ENCODE measurements at regions of chr7 and their contacts with region 1.

Region 1: DNA sequence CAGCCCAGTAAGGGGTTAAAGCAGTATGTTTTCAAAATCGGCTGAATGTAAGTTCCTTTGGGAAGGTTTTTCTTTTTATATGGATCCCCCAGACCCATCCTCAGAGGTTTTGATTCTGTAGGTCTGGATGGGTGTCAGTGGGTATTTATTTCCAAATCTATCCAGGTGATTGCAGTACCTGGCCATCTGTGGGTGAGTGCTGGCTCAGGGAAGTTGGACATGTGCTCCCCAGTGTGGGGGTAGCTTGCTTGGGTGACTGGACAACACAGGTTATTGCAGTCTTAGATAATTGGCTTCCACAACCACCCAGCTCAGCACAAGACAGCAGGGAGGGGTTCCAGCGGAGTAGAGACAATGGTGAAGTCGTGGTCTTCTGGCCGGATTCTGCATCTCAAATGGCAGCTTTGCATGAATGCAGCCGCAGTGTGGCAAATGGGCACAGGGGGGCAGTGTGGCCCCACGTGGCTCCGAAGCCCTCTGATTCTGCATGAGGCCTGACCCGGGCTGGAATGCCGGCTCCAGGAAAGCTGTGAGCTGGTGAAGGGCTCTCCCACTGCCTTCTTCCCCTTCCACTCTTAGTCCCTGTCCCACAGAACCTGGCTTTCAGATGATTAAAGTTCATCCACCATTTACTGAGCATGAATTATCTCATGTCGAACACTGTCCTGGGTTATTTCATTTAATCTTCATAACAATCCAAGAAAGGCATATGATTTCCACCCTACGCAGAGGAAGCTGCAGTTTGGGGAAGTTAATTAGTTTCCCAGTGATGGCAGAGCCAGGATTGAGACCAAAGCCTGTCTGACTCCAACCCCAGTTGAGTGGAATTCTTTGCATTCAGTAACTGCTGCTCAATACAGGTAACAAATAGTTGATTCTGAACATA is 64.5 kb upstream of the SYPL1 start:
- DNase-seq: peak; percentile 56
- H3K4me3 Mint-ChIP-seq: no peak overlapping the region
- H3K27ac Mint-ChIP-seq: no peak overlapping the region
- H3K4me1 Mint-ChIP-seq: peaks cover 5% of the 10 kb centered on the region
- H3K27me3 Mint-ChIP-seq: peaks cover 21% of the 10 kb centered on the region

Region 2: GRCh38 chr7:106139265-106140251 is 37.1 kb before region 1 on chr7:
- intact Hi-C with region 1: no loop called
- DNase-seq: no peak
- H3K4me3 Mint-ChIP-seq: no peak overlapping the region
- H3K27ac Mint-ChIP-seq: no peak overlapping the region
- H3K4me1 Mint-ChIP-seq: no peaks in the 10 kb centered on the region
- H3K27me3 Mint-ChIP-seq: peaks cover 21% of the 10 kb centered on the region

Region 3: GRCh38 chr7:106187613-106188350 is 11.1 kb after region 1 on chr7:
- intact Hi-C with region 1: no loop called
- DNase-seq: no peak
- H3K4me3 Mint-ChIP-seq: no peak overlapping the region
- H3K27ac Mint-ChIP-seq: no peak overlapping the region
- H3K4me1 Mint-ChIP-seq: peaks cover 8% of the 10 kb centered on the region
- H3K27me3 Mint-ChIP-seq: peaks cover 28% of the 10 kb centered on the region

Region 4: DNA sequence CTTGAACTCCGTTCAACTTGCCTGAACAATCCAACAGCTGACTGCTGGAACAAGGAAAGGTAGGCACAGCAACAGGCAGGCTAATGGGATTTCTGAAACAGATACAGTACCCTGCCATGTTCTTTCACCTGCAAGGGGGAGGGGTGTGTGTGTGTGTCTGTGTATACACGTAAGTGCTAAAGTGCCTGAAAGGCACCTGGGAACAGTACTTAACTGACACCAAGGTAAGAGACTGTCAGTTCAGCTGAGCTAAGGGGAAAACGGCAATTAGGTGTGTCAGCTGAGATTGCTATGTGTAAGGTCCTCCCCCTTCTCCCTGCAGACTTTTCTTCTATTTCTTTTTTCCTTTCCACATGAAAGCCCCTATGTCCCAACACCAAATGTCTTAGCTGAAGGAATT is 81.1 kb after region 1 on chr7:
- intact Hi-C with region 1: loop called (anchors 5 kb)
- DNase-seq: no peak
- H3K4me3 Mint-ChIP-seq: no peak overlapping the region
- H3K27ac Mint-ChIP-seq: peak overlapping the region; percentile 25
- H3K4me1 Mint-ChIP-seq: peaks cover 63% of the 10 kb centered on the region
- H3K27me3 Mint-ChIP-seq: no peaks in the 10 kb centered on the region

Region 5: GRCh38 chr7:106273009-106273668 is 96.5 kb after region 1 on chr7:
- intact Hi-C with region 1: no loop called
- DNase-seq: no peak
- H3K4me3 Mint-ChIP-seq: no peak overlapping the region
- H3K27ac Mint-ChIP-seq: peak overlapping the region; percentile 60
- H3K4me1 Mint-ChIP-seq: peaks cover 32% of the 10 kb centered on the region
- H3K27me3 Mint-ChIP-seq: no peaks in the 10 kb centered on the region

Region 6: GRCh38 chr7:106367018-106367420 is 190.4 kb after region 1 on chr7:
- intact Hi-C with region 1: loop called (anchors 5 kb)
- DNase-seq: no peak
- H3K4me3 Mint-ChIP-seq: no peak overlapping the region
- H3K27ac Mint-ChIP-seq: peak overlapping the region; percentile 38
- H3K4me1 Mint-ChIP-seq: peaks cover 26% of the 10 kb centered on the region
- H3K27me3 Mint-ChIP-seq: peaks cover 18% of the 10 kb centered on the region

Region 7: DNA sequence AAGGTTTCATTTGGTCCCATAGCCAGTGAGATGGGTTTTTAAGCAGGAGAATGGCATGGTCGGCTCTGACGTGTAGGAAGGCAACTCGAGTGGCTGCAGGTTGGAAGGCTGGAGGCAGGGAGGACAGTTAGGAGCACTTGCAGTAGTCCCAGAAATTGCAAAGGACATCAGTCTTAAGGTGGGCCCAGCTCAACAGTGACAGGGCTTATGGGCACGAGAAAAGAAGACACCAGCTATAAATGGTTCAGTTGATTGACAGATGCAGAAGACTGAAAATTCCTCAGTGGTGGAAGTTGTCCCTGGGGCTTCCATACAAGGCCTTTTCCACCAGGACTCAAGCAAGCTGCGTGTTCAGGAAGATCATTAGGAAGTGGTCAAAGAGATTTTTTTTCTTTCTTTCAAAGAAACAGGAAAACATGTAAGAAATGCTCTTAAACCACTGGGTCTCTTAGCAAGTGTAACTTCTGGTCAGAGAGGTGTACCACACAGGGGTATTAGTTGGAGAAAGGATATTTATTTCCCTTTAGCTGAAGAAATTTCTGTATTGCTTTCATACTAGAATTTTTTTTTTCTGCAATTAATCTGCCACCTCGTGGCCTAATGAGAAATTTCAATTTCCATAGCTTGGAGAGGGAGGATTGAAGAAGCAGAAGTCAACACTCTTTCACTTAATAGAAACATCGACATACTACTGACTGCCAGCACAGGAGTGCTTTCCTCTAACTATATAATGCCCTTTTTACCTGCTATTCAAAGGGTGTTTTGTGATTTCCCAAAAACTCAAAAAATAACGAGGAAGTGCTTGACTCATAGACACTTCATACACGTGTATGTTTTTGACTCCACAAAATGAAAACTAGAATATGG is 285.6 kb after region 1 on chr7:
- intact Hi-C with region 1: loop called (anchors 1 kb)
- DNase-seq: no peak
- H3K4me3 Mint-ChIP-seq: no peak overlapping the region
- H3K27ac Mint-ChIP-seq: no peak overlapping the region
- H3K4me1 Mint-ChIP-seq: peaks cover 16% of the 10 kb centered on the region
- H3K27me3 Mint-ChIP-seq: no peaks in the 10 kb centered on the region

Region 8: GRCh38 chr7:106542550-106543220 is 366.0 kb after region 1 on chr7:
- intact Hi-C with region 1: loop called (anchors 2 kb)
- DNase-seq: peak; percentile 33
- H3K4me3 Mint-ChIP-seq: no peak overlapping the region
- H3K27ac Mint-ChIP-seq: no peak overlapping the region
- H3K4me1 Mint-ChIP-seq: peaks cover 16% of the 10 kb centered on the region
- H3K27me3 Mint-ChIP-seq: no peaks in the 10 kb centered on the region

Region 9: DNA sequence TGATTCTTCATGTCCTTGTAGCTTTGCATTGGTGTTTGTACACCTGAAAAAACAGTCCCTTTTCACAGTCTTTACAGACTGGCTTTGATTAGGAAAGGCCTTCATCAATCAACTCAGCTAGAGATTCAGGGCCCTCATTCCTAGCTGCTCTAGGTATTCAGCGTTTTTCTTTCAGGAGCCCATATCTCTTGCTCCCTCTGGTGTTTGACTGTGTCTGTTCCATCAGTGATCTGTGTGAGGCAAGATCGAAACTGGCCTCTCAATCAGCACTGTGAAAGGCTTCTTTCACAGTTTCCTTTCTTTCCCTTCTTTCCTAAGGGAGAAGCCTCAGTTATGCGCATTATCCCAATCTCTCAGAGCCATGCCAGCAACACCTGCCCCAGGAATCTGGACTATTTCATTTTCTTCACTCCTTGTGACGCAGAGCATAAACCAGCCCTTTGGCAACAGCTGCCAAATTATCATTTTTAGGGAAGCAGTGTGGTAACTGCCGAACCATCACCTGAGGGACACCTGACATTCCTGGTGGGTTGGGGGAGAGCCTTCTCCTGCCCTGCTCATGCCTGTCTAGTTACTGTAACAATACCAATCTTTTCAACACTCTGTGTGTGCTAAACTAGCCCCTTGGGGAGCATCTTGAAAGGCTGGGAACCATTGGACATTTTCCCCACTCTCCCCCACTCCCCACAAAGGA is 560.0 kb after region 1 on chr7:
- intact Hi-C with region 1: loop called (anchors 1 kb)
- DNase-seq: peak; percentile 43
- H3K4me3 Mint-ChIP-seq: no peak overlapping the region
- H3K27ac Mint-ChIP-seq: no peak overlapping the region
- H3K4me1 Mint-ChIP-seq: peaks cover 41% of the 10 kb centered on the region
- H3K27me3 Mint-ChIP-seq: no peaks in the 10 kb centered on the region

Measured in activated T-helper 2 cell treated with anti-CD3 and anti-CD28 coated beads, Interferon-gamma antibody, Interleukin-2, Interleukin-4, amounts not matched to agents 10 μg/mL and 5 μg/mL and 100 μg/mL, durations not matched to agents 14 hours and 24 hours and 36 hours (primary cell).